ENCODE measurements at regions of chr3 and their contacts with region 1.

Region 1: GRCh38 chr3:94249585-94249984 is 186.7 kb downstream of the NSUN3 start:
- DNase-seq: peak; percentile 47
- CTCF ChIP-seq: peak; percentile 74

Region 2: GRCh38 chr3:94101851-94102250 is 147.7 kb before region 1 on chr3:
- CTCF ChIA-PET with region 1: no interaction called
- POLR2A ChIA-PET with region 1: no interaction called
- DNase-seq: no peak
- CTCF ChIP-seq: no peak

Region 3: DNA sequence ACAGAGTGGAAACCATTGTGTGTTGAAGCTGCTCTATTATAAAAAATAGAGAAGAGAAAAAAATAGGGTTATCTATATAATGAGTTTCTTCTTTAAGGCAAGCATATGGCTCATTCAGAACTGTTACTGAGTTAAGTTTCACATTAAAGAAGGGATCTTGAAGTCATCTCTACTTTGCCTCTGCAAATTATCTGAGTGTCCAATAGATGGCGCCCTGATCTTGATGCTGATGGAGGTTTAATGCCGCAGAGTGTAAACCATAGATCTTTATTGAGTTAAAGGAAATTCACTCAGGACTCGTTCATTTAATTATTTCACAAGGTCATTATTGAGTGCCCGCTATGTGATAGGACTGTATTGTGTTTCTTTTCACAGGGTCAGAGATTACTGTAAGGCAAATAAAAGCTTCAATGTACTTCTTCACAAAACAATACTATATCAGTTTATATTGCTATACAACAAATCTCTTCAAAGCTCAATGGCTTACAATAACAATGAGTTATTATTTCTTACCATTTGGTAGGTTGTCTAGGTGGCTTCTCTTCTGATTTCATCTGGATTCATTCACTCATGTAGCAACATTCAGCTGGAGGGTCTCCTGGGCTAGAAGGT is 15.3 kb before region 1 on chr3:
- CTCF ChIA-PET with region 1: interaction called, 20 read pairs
- POLR2A ChIA-PET with region 1: no interaction called
- DNase-seq: peak; percentile 23
- CTCF ChIP-seq: peak; percentile 58

Region 4: DNA sequence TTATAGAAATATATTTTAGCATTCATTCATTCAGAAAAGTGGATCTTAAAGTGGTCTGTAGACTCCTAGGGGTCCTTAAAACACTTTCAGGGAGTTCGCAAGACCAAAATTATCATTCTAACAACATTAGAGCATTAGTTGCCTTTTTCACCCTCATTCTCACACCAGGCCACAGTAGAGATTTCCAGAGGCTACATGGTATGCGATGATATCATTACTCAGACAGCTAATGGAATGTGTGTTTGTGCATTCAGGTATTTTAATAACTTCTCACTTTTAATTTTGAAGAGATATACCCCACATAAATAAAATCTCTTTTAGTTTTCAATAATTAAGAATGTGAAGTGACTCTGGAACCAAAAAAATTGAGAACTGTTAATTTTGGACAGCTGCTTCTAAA is 20.2 kb after region 1 on chr3:
- CTCF ChIA-PET with region 1: interaction called, 41 read pairs
- POLR2A ChIA-PET with region 1: no interaction called
- DNase-seq: no peak
- CTCF ChIP-seq: no peak

Region 5: DNA sequence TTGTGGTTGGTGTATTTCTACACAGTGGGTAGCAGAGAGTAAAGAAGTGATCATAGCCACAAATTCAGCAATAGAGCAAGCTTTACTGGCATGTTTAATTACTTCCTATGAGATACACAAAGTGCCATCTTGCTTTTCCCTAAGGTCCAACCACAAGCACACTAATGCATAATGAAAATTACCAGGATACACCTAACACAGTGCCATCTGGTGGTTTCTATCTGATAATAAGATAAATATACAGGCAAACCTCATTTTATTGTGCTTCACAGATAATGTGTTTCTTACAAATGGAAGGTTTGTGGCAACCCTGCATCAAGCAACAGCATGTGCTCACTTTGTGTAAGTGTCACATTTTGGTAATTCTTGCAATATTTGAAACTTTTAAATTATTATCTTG is 36.3 kb after region 1 on chr3:
- CTCF ChIA-PET with region 1: interaction called, 10 read pairs
- POLR2A ChIA-PET with region 1: no interaction called
- DNase-seq: no peak
- CTCF ChIP-seq: no peak